ENCODE measurements at regions of chr6 and their contacts with region 1.

Region 1: GRCh38 chr6:46993846-46994245 is 48.3 kb downstream of the ADGRF1 start:
- DNase-seq: no peak
- H3K4me3 ChIP-seq: no peak overlapping the region
- H3K27ac ChIP-seq: no peak overlapping the region
- H3K4me1 ChIP-seq: peaks cover 0 to 19% (median 12%) of the 10 kb centered on the region in 4 donors
- H3K27me3 ChIP-seq: peaks cover 0 to 2% of the 10 kb centered on the region in 2 donors
- CTCF ChIP-seq: no peak

Region 2: DNA sequence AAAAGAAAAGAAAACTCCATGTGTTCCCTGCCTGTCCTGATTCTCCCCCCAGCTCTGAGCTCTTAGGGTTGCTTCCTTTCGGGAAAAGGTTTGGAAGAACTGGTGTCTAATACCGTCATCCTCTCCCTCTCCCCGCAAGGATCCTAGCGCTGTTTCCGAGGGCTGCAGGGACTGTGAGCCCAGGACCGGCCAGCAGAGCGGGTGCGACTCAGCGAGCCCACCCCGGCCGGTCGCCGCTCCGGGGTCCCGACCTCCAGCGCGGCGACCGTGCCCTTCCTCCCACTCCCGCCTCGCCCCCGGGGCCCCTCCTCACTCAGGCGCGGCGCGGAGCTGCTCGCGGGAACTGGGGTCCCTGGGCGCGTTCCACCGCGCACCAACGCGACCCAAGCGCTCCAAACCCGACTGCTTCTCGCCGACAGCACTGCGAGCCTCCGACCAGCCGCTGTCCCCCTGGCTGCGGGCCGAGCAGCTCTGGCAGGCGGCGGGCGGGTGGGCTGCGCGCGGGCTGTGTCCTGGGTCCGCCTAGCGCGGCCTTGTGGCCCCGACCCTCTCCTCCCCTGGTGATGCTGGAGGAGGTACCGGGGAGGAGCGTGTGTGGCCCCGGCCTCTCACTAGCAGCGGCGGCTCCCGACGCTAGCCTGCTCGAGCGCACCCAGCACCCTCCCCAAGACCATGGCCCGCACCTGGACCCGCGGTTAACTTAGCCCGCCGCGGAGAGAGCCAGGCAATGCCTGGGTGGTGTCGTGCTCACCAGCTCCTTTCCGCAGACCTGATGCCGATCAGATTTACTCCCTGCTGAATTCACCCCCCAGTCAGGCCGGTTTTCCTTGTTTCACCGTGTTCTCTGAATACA is 258.8 kb before region 1 on chr6 and contains the start of gene PLA2G7:
- intact Hi-C with region 1: loop called (anchors 5 kb)
- DNase-seq: peak in 1 of 2 donors; percentile 65
- H3K4me3 ChIP-seq: peak within 1 kb of the TSS; percentile 53 to 68
- H3K27ac ChIP-seq: no peak within 1 kb of the TSS
- H3K4me1 ChIP-seq: peaks cover 0 to 15% (median 11%) of the 10 kb centered on the region in 4 donors
- H3K27me3 ChIP-seq: peaks cover 0 to 23% of the 10 kb centered on the region in 2 donors
- CTCF ChIP-seq: no peak

Region 3: DNA sequence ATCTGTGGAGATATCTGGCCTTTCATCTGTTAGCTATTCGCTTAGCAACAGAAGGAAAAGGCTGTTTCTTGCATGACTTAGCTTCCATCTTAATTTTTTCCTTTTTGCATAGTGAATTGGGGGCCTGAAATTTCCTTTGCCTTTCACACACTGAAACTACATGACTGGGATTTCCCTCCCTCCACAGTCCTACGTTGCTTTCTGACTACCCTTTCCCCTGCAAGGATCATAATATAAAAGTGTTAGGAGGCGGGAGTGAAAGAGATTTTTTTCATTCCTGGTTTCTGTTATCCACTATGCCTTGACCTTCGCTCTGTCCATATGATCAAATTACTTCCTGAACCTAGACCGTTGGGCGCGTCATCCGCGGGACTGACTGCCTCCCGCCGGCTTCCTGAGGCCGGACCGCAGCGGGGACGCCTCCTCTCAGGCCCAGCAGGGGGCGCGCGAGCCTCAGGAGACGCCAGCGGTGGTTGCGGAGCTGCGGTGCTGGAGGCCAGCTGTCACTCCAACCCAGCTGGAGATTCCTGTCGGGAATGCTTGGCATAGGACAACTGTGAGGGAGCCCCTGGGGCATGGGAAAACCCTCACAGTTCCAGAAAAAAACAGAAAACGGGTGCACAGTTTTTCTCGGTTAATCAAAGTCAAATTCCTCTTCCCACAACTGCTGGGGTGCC is 145.0 kb before region 1 on chr6:
- intact Hi-C with region 1: loop called (anchors 5 kb)
- DNase-seq: peak; percentile 77 to 86
- H3K4me3 ChIP-seq: no peak overlapping the region
- H3K27ac ChIP-seq: no peak overlapping the region
- H3K4me1 ChIP-seq: peaks cover 0 to 5% (median 2%) of the 10 kb centered on the region in 4 donors
- H3K27me3 ChIP-seq: no peaks in the 10 kb centered on the region
- CTCF ChIP-seq: peak; percentile 93 to 95

Measured in tibial artery (tissue), 4 donors.